ENCODE measurements at regions of chr5 and their contacts with region 1.

Region 1: DNA sequence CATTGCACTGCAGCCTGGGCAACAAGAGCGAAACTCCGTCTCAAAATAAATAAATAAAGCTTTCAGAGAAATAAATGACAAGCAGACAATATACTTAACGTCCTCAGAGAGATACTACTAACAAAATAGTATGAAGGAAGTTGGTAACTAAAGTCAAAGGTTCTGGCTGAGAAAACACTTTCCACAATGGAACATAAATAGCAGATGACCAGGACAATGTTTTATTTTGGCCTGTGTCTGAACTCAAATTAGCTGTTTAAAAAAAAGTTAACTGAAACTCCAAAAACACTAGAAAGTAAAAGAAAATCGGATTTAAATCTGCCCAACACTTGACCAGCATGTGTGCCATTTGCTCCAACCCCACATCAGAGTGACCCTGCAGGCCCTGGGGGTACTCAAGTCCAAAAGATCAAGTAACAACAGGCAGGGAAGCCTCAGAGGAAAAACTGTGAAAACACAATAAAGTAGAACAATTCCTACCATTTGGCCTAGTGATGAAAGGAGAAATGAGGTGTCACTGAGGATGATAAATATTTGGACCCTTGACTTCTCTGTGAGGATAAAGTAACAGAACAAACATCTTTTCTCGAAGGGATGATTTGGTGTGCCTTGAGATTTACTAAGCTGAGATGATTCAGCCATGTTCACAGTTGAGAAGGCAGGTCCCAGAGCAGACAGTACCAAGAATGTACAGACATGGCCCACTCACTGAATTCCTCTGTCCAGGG is 47.7 kb downstream of the LHFPL2 start:
- DNase-seq: no peak
- ATAC-seq: peak; percentile 26
- H3K4me3 ChIP-seq: no peak overlapping the region
- H3K4me1 ChIP-seq: peaks cover 15% of the 10 kb centered on the region
- CTCF ChIP-seq: no peak

Region 2: DNA sequence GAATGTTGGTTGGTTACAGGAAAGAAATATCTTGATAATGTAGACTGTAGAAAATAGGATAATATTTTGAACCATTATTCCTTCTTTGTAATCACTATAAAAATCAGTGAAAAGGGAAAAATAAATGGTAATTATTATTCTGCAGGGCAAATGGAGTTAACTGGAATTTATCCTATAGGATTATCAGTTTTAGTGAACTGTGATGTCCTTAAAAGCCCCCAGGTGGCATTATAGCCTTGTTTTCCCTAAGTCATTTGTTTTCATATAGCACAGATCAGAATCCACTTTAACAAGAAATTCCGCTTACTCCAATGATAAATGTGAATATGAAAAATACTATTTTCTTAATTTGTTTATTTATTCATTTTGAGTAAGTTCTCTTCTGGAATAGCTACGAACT is 1082.5 kb before region 1 on chr5:
- intact Hi-C with region 1: loop called in 1 of 2 experiments (anchors 10 kb)
- DNase-seq: no peak
- ATAC-seq: no peak
- H3K4me3 ChIP-seq: no peak overlapping the region
- H3K4me1 ChIP-seq: no peaks in the 10 kb centered on the region
- CTCF ChIP-seq: no peak

Region 3: DNA sequence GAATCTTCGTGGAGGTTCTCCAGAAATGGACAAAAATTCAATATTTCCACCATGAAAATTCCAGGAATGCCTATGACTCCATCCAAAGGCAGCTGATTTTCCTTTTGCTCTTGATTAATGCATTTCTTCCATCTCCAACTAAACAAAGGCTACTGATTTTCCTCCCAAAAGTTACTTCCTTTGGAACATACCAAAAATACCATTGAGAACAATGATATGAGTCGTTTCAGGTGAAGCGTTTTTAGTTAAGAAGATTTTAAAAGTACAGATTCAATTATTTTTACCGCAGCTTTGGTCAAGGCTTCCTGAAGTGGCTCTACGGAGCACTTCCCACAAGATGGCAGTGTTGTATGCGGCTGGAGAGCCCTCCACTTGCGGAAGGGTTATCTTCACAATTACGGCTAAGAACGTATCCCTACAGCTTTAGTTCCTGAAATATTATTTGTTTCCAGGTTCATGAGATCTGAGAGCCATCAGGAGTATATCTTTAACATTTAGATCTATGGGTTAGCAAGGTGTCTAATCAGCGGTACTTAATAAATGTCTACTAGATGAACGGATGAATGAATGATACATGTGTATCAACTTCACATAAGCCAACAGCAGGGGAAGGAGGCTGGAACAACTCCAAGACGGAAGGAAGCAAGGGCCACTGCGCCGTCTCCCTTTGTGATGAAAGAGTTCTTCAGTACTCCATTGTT is 420.2 kb after region 1 on chr5:
- intact Hi-C with region 1: no loop called
- DNase-seq: peak in 2 of 3 donors; percentile 50 to 73
- ATAC-seq: peak; percentile 91
- H3K4me3 ChIP-seq: no peak overlapping the region
- H3K4me1 ChIP-seq: peaks cover 4% of the 10 kb centered on the region
- CTCF ChIP-seq: peak; percentile 66

Measured in mucosa of descending colon (tissue), 3 donors.